ENCODE measurements at regions of chr12 and their contacts with region 1.

Region 1: GRCh38 chr12:53746592-53747092 is 5.1 kb downstream of the CISTR start:
- DNase-seq: peak; percentile 80 to 94 (median 84)
- ATAC-seq: peak; percentile 85
- H3K4me3 ChIP-seq: no peak overlapping the region
- H3K4me3 Mint-ChIP-seq: peak overlapping the region; percentile 57
- H3K27ac ChIP-seq: no peak overlapping the region
- H3K27ac Mint-ChIP-seq: no peak overlapping the region
- H3K4me1 ChIP-seq: peaks cover 41% of the 10 kb centered on the region
- H3K4me1 Mint-ChIP-seq: peaks cover 5% of the 10 kb centered on the region
- H3K27me3 ChIP-seq: peaks cover 55 to 65% of the 10 kb centered on the region in 2 experiments
- H3K27me3 Mint-ChIP-seq: no peaks in the 10 kb centered on the region
- CTCF ChIP-seq: peak; percentile 100

Region 2: DNA sequence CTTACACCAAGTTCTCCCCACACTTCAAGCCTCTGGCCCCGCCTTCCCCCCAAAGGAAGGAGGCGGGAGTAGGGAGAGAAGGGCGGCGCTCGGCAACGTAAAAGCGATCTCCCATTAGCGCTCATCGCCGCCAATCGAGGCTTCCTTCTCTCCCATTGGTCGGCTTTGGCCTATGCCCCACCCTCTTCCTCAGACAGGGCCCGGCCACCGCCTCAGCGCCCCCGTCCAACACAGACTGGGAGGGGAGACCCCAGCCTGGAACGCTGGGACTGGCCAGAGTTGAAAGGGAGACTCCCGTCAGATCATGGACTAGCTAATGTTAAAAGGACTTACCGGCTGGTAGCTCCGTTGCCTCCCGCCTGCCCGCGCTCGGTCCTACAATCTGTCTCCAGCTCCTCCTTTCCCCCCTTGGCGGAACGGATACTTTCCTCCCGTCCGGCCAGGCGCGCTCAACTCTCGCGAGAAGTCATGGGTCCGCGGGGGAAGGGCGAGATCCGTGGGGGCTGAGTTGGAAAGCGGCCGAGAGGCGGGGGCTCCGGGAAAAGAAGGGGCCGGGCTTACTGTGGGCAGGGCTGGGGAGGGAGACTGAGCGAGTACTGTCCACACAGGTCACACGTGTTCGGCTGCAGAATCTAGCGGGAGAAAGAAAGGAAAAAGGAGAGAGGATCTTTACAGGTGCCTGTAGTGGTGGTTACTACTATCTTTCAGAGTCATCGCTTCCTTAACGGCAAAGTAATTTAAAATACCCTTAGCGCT is 120.5 kb before region 1 on chr12 and contains the start of gene ATF7:
- CTCF ChIA-PET with region 1: interaction called, 9 read pairs
- POLR2A ChIA-PET with region 1: no interaction called
- intact Hi-C with region 1: loop called in 1 of 2 experiments (anchors 5 kb)
- DNase-seq: peak; percentile 95 to 99 (median 98)
- ATAC-seq: peak; percentile 93
- H3K4me3 ChIP-seq: peak within 1 kb of the TSS; percentile 73
- H3K4me3 Mint-ChIP-seq: peak within 1 kb of the TSS; percentile 99
- H3K27ac ChIP-seq: peak within 1 kb of the TSS; percentile 73 to 78
- H3K27ac Mint-ChIP-seq: peak within 1 kb of the TSS; percentile 91
- H3K4me1 ChIP-seq: peaks cover 26% of the 10 kb centered on the region
- H3K4me1 Mint-ChIP-seq: peaks cover 57% of the 10 kb centered on the region
- H3K27me3 ChIP-seq: no peaks in the 10 kb centered on the region
- H3K27me3 Mint-ChIP-seq: no peaks in the 10 kb centered on the region
- CTCF ChIP-seq: no peak
- total RNA-seq, gene ATF7: 13.3 to 14.3 TPM

Region 3: GRCh38 chr12:53701518-53702260 is 45.0 kb before region 1 on chr12:
- CTCF ChIA-PET with region 1: interaction called, 33 read pairs
- POLR2A ChIA-PET with region 1: interaction called, 6 read pairs
- intact Hi-C with region 1: loop called (anchors 1 kb)
- DNase-seq: peak; percentile 61 to 85 (median 72)
- ATAC-seq: peak; percentile 91
- H3K4me3 ChIP-seq: no peak overlapping the region
- H3K4me3 Mint-ChIP-seq: no peak overlapping the region
- H3K27ac ChIP-seq: no peak overlapping the region
- H3K27ac Mint-ChIP-seq: no peak overlapping the region
- H3K4me1 ChIP-seq: peaks cover 4% of the 10 kb centered on the region
- H3K4me1 Mint-ChIP-seq: peaks cover 6% of the 10 kb centered on the region
- H3K27me3 ChIP-seq: peaks cover 50 to 62% of the 10 kb centered on the region in 2 experiments
- H3K27me3 Mint-ChIP-seq: peaks cover 95% of the 10 kb centered on the region
- CTCF ChIP-seq: peak; percentile 90

Region 4: DNA sequence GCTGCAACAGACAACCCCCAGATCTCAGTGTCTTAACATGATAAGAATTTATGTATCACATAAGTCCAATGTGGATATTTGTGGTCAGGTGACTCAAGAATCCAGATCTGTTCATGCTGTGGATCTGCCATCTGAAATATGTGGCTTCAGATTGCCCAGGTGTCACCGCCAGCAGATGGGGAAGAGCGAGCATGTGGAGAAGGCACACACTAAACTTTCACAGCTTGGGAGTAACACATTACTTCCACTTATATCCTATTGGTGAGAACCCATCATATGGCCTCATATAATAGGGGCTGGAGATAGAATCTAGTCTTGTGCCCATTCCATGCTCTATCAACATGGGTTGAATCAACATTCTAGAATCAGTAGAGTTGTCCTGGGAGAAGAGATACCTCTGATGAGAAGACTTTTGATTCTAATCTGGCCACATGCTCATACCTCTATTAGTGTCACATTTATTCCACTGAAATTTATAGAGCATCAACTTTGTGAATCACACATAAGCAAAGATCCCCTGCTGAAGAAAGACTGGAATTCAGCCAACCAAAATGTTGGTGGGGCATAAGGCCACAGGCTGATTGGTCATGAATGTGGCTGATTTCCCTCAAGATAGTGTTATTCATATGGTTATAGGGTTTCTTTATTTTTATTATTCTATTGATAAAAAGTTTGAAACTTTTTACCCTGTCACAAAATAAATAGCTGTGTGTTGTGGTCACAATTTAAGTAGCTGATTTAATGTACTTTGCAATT is 13.4 kb before region 1 on chr12:
- CTCF ChIA-PET with region 1: interaction called, 57 read pairs
- POLR2A ChIA-PET with region 1: interaction called, 11 read pairs
- intact Hi-C with region 1: loop called in 1 of 2 experiments (anchors 2 kb)
- DNase-seq: no peak
- ATAC-seq: no peak
- H3K4me3 ChIP-seq: no peak overlapping the region
- H3K4me3 Mint-ChIP-seq: no peak overlapping the region
- H3K27ac ChIP-seq: no peak overlapping the region
- H3K27ac Mint-ChIP-seq: no peak overlapping the region
- H3K4me1 ChIP-seq: peaks cover 12% of the 10 kb centered on the region
- H3K4me1 Mint-ChIP-seq: peaks cover 12% of the 10 kb centered on the region
- H3K27me3 ChIP-seq: peaks cover 5 to 15% of the 10 kb centered on the region in 2 experiments
- H3K27me3 Mint-ChIP-seq: peaks cover 25% of the 10 kb centered on the region
- CTCF ChIP-seq: no peak

Region 5: GRCh38 chr12:53995378-53996239 is 249.0 kb after region 1 on chr12:
- CTCF ChIA-PET with region 1: no interaction called
- POLR2A ChIA-PET with region 1: no interaction called
- intact Hi-C with region 1: no loop called
- DNase-seq: peak in 3 of 14 experiments; percentile 36 to 54 (median 48)
- ATAC-seq: peak; percentile 50
- H3K4me3 ChIP-seq: peak overlapping the region; percentile 58
- H3K4me3 Mint-ChIP-seq: peak overlapping the region; percentile 88
- H3K27ac ChIP-seq: no peak overlapping the region
- H3K27ac Mint-ChIP-seq: no peak overlapping the region
- H3K4me1 ChIP-seq: peaks cover 60% of the 10 kb centered on the region
- H3K4me1 Mint-ChIP-seq: peaks cover 61% of the 10 kb centered on the region
- H3K27me3 ChIP-seq: peaks cover 97 to 99% of the 10 kb centered on the region in 2 experiments
- H3K27me3 Mint-ChIP-seq: peaks cover 100% of the 10 kb centered on the region
- CTCF ChIP-seq: no peak

Measured in CD4-positive, alpha-beta T cell (primary cell).